Activated CD8-positive, alpha-beta T cell treated with anti-CD3 and anti-CD28 coated beads, Interleukin-2, amount 10 ng/mL, durations not matched to agents 7 days and 5 days (primary cell): ENCODE measurements at regions of chr2 and their contacts with region 1.

Region 1: DNA sequence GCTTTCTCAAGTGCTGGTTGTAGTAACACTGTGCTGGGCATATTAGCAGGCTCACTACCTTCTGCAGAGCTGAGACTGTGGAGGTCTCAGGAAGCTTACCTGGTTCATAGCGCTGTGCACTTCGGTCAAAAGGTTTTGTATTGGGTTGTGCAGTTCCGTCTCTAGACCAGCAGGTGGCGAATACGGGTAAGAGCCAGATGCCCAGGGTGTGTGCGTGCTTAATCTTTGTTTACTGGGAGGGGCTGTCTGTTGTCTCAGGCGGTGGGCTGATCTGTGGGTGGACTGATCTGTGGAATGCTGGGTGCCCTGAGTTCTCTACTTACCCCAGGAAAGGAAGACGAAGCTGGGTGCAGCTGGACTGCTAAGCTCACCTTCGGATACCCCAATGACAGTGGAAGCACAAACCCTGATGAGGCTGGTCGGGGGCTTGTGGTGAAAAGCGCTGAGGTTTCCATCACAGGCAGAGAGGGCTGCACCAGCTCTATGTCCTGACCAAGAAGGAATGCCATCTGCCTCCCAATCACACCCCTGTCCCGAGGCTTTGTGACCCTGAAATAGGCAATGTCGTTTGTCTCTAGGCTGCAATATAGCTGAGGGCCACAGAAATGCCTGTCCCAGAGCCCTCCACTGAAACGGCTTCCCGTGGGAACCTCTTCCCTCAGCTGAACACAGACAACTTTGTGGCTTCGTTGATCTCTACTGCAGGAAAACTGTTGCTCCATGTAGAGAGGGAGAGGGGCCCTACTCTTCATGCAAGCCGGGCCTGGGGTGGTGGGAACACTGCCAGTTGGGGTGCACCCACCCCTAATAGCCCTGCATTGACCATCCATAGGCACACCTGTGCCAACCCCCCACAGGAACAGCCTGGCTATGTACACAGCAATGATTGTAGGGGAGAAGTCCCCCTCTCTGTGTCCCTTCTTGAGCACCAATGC is 45.9 kb upstream of the FAM117B start:
- DNase-seq: peak; percentile 80
- ATAC-seq: peak; percentile 96
- H3K4me3 Mint-ChIP-seq: no peak overlapping the region
- H3K27ac Mint-ChIP-seq: peak overlapping the region; percentile 77
- H3K4me1 Mint-ChIP-seq: peaks cover 12% of the 10 kb centered on the region
- H3K27me3 Mint-ChIP-seq: no peaks in the 10 kb centered on the region

Region 2: DNA sequence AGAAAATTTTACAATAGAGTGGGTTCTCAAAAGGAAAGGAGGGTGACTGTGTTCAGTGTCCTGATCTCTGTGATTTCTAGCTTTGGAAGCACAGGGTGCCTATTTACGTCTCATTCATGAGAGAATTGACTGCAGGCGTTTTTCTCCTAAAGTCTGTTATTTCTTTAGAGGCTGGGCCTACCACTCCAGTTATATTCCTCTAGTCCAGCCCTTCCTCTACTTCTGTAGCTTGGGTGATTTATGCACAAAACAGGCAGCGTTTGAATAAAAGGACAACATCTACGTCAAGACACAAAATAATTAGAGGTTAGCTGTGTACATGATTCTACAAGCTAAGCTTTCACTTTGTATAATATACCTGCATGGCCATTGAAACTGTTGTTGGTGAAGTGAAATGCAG is 13.4 kb after region 1 on chr2:
- CTCF ChIA-PET with region 1: interaction called, 24 read pairs
- POLR2A ChIA-PET with region 1: no interaction called
- DNase-seq: no peak
- ATAC-seq: no peak
- H3K4me3 Mint-ChIP-seq: no peak overlapping the region
- H3K27ac Mint-ChIP-seq: no peak overlapping the region
- H3K4me1 Mint-ChIP-seq: peaks cover 4% of the 10 kb centered on the region
- H3K27me3 Mint-ChIP-seq: no peaks in the 10 kb centered on the region

Region 3: GRCh38 chr2:202628646-202629198 is 39.8 kb after region 1 on chr2:
- CTCF ChIA-PET with region 1: interaction called, 17 read pairs
- POLR2A ChIA-PET with region 1: no interaction called
- DNase-seq: no peak
- ATAC-seq: no peak
- H3K4me3 Mint-ChIP-seq: no peak overlapping the region
- H3K27ac Mint-ChIP-seq: no peak overlapping the region
- H3K4me1 Mint-ChIP-seq: peaks cover 14% of the 10 kb centered on the region
- H3K27me3 Mint-ChIP-seq: no peaks in the 10 kb centered on the region

Region 4: GRCh38 chr2:202634556-202635427 is 45.9 kb after region 1 on chr2 and contains the start of gene FAM117B:
- CTCF ChIA-PET with region 1: interaction called, 17 read pairs
- POLR2A ChIA-PET with region 1: interaction called, 5 read pairs
- DNase-seq: peak; percentile 99
- ATAC-seq: peak; percentile 92
- H3K4me3 Mint-ChIP-seq: peak within 1 kb of the TSS; percentile 95
- H3K27ac Mint-ChIP-seq: peak within 1 kb of the TSS; percentile 92
- H3K4me1 Mint-ChIP-seq: peaks cover 52% of the 10 kb centered on the region
- H3K27me3 Mint-ChIP-seq: no peaks in the 10 kb centered on the region
- total RNA-seq, gene FAM117B: 17.1 to 18.8 TPM

Region 5: DNA sequence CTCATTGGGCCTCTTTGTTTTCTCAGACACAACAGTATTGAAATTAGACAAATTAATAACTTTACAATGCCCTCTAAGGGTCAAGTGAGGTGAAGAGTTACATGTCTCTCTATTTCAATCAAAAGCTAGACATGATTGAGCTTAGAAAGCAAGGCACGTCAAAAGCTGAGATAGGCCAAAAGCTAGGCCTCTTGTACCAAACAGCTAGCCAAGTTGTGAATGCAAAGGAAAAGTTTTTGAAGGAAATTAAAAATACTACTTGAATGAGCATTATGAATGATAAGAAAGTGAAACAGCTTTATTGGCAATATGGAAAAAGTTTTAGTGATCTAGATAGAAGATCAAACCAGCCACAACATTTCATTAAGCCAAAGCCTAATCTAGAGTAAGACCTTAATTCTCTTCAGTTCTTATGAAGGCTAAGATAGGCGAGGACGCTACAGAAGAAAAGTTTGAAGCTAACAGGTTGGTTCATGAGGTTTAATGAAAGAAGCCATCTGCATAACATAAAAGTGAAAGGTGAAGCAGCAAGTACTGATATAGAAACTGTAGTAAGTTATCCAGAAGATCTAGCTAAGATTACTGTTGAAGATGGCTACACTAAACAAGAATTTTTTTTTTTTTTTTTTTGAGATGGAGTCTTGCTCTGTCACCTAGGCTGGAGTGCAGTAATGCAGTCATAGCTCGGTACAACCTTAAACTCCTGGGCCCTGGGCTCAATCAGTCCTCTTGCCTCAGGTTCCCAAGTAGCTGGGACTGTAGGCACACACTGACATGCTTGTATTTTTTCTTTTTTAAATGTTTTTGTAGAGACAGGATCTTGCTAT is 111.4 kb after region 1 on chr2:
- CTCF ChIA-PET with region 1: interaction called, 14 read pairs
- POLR2A ChIA-PET with region 1: no interaction called
- DNase-seq: no peak
- ATAC-seq: peak; percentile 54
- H3K4me3 Mint-ChIP-seq: peak overlapping the region; percentile 16
- H3K27ac Mint-ChIP-seq: peak overlapping the region; percentile 50
- H3K4me1 Mint-ChIP-seq: peaks cover 23% of the 10 kb centered on the region
- H3K27me3 Mint-ChIP-seq: no peaks in the 10 kb centered on the region

Region 6: GRCh38 chr2:202870431-202871299 is 281.8 kb after region 1 on chr2:
- CTCF ChIA-PET with region 1: interaction called, 57 read pairs
- POLR2A ChIA-PET with region 1: no interaction called
- DNase-seq: peak; percentile 79
- ATAC-seq: peak; percentile 88
- H3K4me3 Mint-ChIP-seq: peak overlapping the region; percentile 90
- H3K27ac Mint-ChIP-seq: peak overlapping the region; percentile 82
- H3K4me1 Mint-ChIP-seq: peaks cover 12% of the 10 kb centered on the region
- H3K27me3 Mint-ChIP-seq: peaks cover 1% of the 10 kb centered on the region